ENCODE measurements at regions of chr15 and their contacts with region 1.

Region 1: DNA sequence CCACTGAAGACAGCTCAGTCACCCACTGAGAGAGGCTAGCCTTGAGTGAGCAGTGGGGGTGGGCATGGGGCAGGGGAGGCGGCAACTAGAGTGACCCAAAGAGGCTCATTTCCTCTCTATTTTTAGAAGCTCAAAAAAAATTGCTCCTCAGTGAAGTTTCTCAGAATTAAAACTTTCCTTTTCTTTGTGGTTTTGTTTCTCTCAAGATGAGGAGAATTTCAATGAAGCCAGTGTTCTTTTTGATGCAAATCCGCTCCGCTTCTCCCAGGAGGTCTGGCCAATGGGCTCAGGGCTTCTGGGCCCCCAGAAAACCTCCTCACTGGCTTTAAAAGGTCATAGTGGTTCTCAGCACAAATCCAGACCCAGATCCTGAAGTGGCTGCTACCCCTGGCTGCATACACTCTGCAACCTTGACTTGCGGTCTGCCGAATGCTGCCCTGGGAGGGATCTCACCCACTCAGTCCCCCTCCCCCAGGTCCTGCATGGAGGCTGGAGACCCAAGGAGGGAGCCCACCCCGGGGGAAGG is at the start of gene ACSBG1:
- DNase-seq: no peak
- H3K4me3 ChIP-seq: no peak within 1 kb of the TSS
- H3K27ac ChIP-seq: no peak within 1 kb of the TSS
- H3K4me1 ChIP-seq: no peaks in the 10 kb centered on the region
- H3K27me3 ChIP-seq: peaks cover 0 to 30% (median 0%) of the 10 kb centered on the region in 4 donors
- CTCF ChIP-seq: no peak
- POLR2A ChIP-seq: no peak
- total RNA-seq, gene ACSBG1: 0.09 to 0.31 TPM in 2 of 4 donors, not detected in the others

Region 2: GRCh38 chr15:78182821-78183220 is 51.8 kb before region 1 on chr15:
- intact Hi-C with region 1: loop called (anchors 5 kb)
- DNase-seq: no peak
- H3K4me3 ChIP-seq: no peak overlapping the region
- H3K27ac ChIP-seq: no peak overlapping the region
- H3K4me1 ChIP-seq: no peaks in the 10 kb centered on the region
- H3K27me3 ChIP-seq: no peaks in the 10 kb centered on the region
- CTCF ChIP-seq: no peak
- POLR2A ChIP-seq: no peak

Region 3: GRCh38 chr15:78291716-78292115 is 57.1 kb after region 1 on chr15:
- intact Hi-C with region 1: no loop called
- DNase-seq: no peak
- H3K4me3 ChIP-seq: no peak overlapping the region
- H3K27ac ChIP-seq: peak overlapping the region in 3 of 4 donors; percentile 25 to 53 (median 52)
- H3K4me1 ChIP-seq: peaks cover 0 to 19% (median 0%) of the 10 kb centered on the region in 3 donors
- H3K27me3 ChIP-seq: no peaks in the 10 kb centered on the region
- CTCF ChIP-seq: no peak
- POLR2A ChIP-seq: no peak

Measured in esophagus squamous epithelium (tissue), 5 donors.